ENCODE measurements at regions of chr6 and their contacts with region 1.

Region 1: DNA sequence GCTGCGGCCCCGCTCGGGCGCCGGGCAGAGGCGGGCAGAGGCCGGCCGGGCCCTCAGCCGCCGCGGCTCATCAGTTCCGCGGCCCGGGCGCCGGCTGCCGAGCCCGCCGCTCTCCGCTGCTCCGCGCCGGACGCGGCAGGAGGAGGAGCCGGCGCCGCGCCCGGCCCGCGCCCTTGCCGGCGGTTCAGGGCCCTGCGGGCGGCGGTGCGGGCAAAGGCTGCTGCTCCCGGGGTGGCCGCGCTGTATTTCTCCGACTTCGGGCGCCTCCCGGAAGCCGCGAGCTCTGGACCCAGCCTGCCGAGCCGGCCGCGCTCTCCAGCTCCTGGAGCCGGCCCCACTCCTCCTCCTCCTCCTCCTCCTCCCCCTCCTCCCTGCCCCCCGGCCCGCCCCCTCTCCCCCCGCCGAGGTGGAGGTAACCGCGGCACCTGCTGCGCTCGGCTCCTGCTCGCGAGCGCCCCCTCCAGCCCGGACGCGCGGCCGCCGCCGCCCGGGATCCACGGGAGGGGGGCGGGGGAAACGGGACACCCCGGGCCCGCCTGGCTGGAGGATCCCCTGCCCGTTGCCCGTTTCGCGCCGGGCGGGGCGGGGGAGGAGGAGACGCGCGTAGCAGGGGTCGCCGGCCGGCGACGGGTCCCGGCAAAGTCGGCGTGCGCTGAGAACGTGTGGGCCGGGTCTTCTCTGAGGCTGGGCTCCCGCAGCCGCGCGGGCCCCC is at the start of gene SLC22A23:
- DNase-seq: peak; percentile 84
- ATAC-seq: peak; percentile 53
- H3K4me3 ChIP-seq: peak within 1 kb of the TSS; percentile 89
- H3K27ac ChIP-seq: no peak within 1 kb of the TSS
- H3K4me1 ChIP-seq: peaks cover 18% of the 10 kb centered on the region
- H3K27me3 ChIP-seq: no peaks in the 10 kb centered on the region
- CTCF ChIP-seq: peak; percentile 52
- total RNA-seq, gene SLC22A23: 5.7 and 8.2 TPM in 2 replicates

Region 2: DNA sequence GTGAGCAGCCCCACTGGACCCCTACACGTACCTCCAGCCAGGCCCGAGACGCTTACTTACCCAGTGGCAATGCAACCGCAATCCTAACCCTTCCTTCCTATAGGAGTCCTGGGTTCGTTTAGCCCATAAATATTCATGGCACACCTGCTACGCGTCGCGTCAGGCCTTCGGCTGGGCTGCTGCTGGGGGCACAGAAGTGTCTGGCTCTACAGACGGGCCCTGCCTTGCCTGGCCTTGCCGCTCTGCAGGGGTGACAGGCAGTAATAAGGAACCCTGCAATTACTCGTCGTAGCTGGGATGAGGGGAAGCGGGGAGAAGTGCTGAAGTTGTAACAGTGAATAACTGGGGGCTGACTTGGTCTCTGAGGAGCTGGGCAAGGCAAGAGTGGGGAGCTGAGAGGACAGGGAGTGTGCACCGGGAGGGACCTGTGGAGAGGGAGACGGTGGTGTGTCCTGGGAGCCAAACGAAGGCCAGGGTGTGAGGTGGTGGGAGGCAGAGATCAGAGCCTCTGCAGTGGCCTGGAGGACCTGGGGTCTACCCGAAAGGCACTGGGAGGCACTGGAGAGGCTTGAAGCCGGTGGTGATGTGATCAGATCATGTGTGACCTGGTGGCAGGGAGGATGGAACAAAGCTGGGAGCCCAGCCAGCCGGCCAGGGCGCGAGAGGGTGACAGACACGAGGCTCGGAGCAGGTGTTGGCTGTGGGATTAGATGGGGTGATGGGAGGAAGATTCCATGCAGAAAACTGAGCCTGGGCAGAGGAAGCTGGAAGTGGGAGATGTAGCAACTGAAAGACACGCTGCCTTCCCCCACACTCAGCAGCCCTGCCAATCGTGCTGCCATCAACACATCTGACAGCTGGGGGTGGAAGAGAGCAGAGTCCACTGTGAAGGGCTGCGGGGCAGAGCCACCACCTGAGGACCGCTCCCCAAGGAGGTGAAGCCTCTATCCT is 161.7 kb before region 1 on chr6:
- CTCF ChIA-PET with region 1: no interaction called
- POLR2A ChIA-PET with region 1: no interaction called
- intact Hi-C with region 1: loop called (anchors 5 kb)
- DNase-seq: peak; percentile 20
- ATAC-seq: no peak; the same call in 1 of the 2 replicates
- H3K4me3 ChIP-seq: no peak overlapping the region
- H3K27ac ChIP-seq: no peak overlapping the region
- H3K4me1 ChIP-seq: peaks cover 18% of the 10 kb centered on the region
- H3K27me3 ChIP-seq: no peaks in the 10 kb centered on the region
- CTCF ChIP-seq: peak; percentile 41

Region 3: GRCh38 chr6:3405680-3406079 is 51.2 kb before region 1 on chr6:
- CTCF ChIA-PET with region 1: interaction called, 3 read pairs
- POLR2A ChIA-PET with region 1: no interaction called
- intact Hi-C with region 1: loop called (anchors 5 kb)
- DNase-seq: peak; percentile 59
- ATAC-seq: peak; percentile 44; the same call in 1 of the 2 replicates
- H3K4me3 ChIP-seq: no peak overlapping the region
- H3K27ac ChIP-seq: peak overlapping the region; percentile 79
- H3K4me1 ChIP-seq: peaks cover 50% of the 10 kb centered on the region
- H3K27me3 ChIP-seq: no peaks in the 10 kb centered on the region
- CTCF ChIP-seq: no peak

Region 4: DNA sequence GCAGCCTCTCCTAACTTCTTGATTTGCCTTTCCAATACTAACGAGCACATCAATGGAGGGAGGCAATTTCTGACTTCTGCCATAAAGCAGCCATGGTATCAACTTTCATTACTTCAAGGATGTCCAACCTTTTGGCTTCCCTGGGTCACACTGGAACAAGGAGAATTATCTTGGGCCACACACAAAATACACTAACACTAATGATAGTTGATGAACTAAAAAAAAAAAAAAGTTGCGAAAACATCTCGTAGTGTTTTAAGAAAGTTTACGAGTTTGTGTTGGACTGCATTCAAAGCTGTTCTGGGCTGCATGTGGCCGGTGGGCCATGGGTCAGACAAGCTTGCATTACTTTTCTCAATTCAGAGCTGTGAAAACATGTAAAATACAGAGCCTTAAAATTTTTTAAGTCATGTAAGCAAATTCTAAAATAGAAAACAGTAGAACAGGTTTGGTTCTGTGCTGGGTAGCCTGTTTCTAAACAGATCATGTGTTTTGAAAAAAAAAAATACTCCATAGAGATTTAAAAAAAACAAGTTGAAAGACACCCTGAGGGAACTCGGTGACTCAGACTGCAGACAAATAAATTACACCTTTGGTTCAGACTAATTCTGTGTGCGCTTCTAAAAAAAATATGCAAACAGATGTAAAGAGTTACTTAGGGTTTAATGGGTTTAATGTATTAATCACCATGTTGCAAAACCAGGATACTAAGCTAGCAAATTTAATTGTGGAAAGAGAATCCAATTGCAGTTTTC is 43.5 kb after region 1 on chr6:
- CTCF ChIA-PET with region 1: interaction called, 4 read pairs
- POLR2A ChIA-PET with region 1: no interaction called
- intact Hi-C with region 1: loop called (anchors 2 kb)
- DNase-seq: peak; percentile 88
- ATAC-seq: peak; percentile 92
- H3K4me3 ChIP-seq: peak overlapping the region; percentile 16; the same call in 1 of the 2 replicates
- H3K27ac ChIP-seq: peak overlapping the region; percentile 14; the same call in 1 of the 2 replicates
- H3K4me1 ChIP-seq: peaks cover 22% of the 10 kb centered on the region
- H3K27me3 ChIP-seq: 0 out of 2 replicates have a peak, but pooled peaks cover 5% of the 10 kb centered on the region
- CTCF ChIP-seq: no peak

Region 5: DNA sequence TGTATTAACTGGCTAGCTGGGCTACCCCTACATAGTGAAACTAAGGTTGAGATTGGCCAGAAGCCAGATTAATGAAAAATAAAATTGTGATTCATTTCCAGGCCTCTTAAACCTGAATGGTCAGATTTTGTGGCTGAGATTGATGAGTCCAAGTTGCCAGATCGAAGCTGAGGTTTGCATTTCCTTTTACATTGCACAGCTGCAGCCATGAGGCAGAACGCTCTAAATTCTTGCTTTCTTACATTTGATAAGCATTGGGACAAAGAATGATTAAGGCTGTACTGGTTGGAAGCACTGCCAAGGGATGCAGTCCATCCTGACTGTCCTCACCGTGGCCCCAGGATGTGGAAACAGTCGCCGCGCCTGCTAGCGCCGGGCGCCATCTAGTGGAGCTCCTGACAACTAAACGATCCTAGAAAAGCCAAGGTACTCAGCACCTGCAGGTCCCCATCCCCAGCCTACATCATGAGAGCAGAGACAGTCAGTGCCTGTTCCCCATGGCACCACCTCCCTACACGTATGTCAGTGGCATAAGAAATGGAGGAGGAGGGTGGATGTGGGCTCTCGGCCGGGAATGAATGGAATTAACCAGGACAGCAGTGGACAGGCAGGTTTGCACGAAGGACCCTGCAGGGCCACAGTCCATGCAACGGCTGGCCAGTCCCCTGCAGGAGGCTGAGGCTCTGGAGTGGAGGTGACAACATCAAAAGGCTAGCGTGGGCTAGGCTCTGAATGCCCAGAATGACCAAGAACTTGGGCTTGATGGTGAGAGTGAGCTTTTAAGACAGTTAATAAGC is 275.6 kb after region 1 on chr6:
- CTCF ChIA-PET with region 1: no interaction called
- POLR2A ChIA-PET with region 1: no interaction called
- intact Hi-C with region 1: loop called (anchors 2 kb)
- DNase-seq: peak; percentile 86
- ATAC-seq: peak; percentile 96
- H3K4me3 ChIP-seq: peak overlapping the region; percentile 20; the same call in 1 of the 2 replicates
- H3K27ac ChIP-seq: peak overlapping the region; percentile 30
- H3K4me1 ChIP-seq: peaks cover 12% of the 10 kb centered on the region
- H3K27me3 ChIP-seq: no peaks in the 10 kb centered on the region
- CTCF ChIP-seq: peak; percentile 96

Measured in PC-3 (cell line).